Activated CD4-positive, alpha-beta memory T cell treated with anti-CD3 and anti-CD28 coated beads for 36 hours (primary cell): ENCODE measurements at regions of chr15 and their contacts with region 1.

Region 1: DNA sequence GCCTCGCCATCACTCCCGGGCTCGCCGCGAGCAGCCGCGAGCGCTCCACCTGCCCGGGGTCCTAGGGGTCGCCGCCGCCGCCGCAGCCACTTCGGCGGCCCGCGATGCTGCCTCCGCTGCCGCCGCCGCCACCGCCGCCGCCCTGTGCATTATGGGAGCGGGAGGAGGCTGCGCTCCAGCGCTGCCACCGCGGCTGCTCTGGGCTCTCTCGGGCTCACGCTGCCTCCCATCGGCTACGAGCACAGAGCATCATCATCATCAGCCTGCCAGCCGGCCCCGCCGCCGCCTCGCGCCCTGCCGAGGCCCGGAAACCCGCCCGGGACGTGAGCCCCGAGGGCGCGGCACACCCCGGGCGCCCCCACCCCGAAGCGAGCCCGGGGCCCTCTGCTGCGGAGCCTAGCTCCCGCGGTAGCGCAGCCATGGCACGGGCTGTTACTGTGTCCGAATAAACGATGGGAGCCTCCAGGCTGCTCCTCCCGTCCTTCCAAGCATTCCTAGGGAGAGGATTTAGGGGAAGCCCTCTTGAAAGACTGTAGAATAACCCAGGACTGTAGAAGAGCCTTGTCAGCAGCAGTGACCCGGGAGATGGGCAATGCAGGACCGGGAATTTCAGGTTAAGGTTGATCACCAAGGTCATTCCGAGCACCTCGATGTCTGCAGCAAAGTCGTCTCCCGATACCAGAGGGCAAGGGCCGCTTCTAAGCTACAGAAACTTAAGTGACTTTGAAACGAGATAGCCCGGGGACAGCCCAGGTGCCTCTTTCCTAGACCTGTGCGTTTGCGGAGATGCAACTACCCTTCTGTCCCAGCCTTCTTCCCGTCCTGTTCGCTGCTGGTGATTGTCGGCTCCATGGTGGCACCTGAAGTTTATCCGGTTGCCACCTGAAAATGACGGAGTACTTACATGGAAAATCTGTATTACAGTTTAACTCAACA is 579 bp upstream of the MYO5A start:
- DNase-seq: peak; percentile 86
- H3K4me3 Mint-ChIP-seq: peak overlapping the region; percentile 78
- H3K27ac Mint-ChIP-seq: peak overlapping the region; percentile 75
- H3K4me1 Mint-ChIP-seq: peaks cover 33% of the 10 kb centered on the region
- H3K27me3 Mint-ChIP-seq: peaks cover 2% of the 10 kb centered on the region

Region 2: GRCh38 chr15:52256366-52256765 is 272.9 kb before region 1 on chr15:
- CTCF ChIA-PET with region 1: no interaction called
- POLR2A ChIA-PET with region 1: no interaction called
- intact Hi-C with region 1: loop called (anchors 2 kb)
- DNase-seq: peak; percentile 84
- H3K4me3 Mint-ChIP-seq: peak overlapping the region; percentile 37
- H3K27ac Mint-ChIP-seq: peak overlapping the region; percentile 56
- H3K4me1 Mint-ChIP-seq: peaks cover 23% of the 10 kb centered on the region
- H3K27me3 Mint-ChIP-seq: no peaks in the 10 kb centered on the region

Region 3: DNA sequence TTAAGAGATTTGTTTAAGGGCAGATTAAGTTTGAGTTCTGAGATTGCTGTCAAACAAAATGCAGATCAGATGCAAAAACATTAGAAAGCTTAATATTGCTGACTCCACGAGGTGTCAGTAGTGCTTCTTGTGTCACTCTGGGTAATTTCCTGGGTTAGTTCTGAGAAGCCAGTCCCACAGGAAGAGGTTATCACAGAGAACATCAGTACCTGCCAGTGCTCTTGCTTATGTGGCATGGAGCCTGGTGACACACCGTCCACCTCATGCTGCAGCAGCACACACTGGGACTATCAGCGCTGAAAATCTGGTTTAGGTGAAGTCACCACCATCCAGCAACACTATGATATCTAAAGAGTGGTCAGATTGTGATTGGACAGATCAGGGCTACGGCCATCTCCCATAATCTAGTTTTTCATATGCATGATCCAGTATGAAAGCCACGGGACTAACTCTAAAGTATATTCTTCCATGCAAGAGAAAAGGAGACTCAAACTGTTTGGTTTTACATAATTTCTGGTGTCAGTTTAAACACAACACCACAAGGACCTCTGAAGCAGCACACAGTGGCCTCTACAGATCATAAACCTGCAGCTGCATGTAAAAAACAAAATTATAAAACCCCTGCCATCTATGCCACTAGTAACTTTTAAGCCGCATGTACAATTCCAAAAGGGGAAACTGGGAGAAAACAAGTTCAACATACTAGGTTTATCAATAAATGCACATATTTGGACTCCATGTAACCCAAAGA is 197.6 kb before region 1 on chr15:
- CTCF ChIA-PET with region 1: interaction called, 3 read pairs
- POLR2A ChIA-PET with region 1: interaction called, 3 read pairs
- intact Hi-C with region 1: loop called (anchors 1 kb)
- DNase-seq: peak; percentile 76
- H3K4me3 Mint-ChIP-seq: no peak overlapping the region
- H3K27ac Mint-ChIP-seq: peak overlapping the region; percentile 82
- H3K4me1 Mint-ChIP-seq: peaks cover 18% of the 10 kb centered on the region
- H3K27me3 Mint-ChIP-seq: no peaks in the 10 kb centered on the region

Region 4: DNA sequence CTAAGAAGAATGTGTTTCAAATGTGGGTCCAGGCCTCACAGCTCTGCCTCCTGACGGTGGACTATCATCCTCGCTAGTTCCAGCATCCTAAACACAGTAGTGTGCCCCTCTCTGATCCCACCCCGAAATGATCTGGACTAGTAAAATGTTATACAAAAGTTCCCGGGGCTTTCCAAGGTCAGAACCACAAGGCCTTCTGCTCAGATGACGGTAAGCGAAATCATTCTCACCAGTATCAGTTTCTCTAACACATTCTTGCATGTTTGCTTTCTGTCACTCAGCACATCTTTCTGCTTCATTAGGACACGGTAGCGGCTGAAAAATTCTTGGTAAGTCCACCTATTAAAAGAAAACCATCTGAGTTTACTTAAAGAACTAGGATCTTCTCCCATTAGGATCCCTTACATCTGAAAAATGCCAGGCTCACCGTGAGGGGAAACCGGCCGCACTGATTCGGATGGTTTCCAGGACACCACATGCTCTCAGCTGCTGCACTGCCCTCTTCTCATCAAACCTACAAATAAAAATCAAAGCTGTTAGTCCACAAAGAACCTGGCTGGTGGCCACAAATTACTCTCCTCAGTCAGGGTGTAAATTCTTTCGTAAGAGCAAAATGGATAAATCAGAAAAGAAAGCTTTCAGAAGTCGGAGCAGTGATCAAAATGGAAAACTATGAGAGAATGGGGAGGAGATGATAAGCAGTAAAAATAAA is 149.7 kb before region 1 on chr15:
- CTCF ChIA-PET with region 1: interaction called, 3 read pairs
- POLR2A ChIA-PET with region 1: interaction called, 4 read pairs
- intact Hi-C with region 1: loop called (anchors 1 kb)
- DNase-seq: peak; percentile 51
- H3K4me3 Mint-ChIP-seq: peak overlapping the region; percentile 49
- H3K27ac Mint-ChIP-seq: peak overlapping the region; percentile 75
- H3K4me1 Mint-ChIP-seq: peaks cover 43% of the 10 kb centered on the region
- H3K27me3 Mint-ChIP-seq: no peaks in the 10 kb centered on the region

Region 5: GRCh38 chr15:52481915-52482314 is 47.3 kb before region 1 on chr15:
- CTCF ChIA-PET with region 1: no interaction called
- POLR2A ChIA-PET with region 1: no interaction called
- intact Hi-C with region 1: loop called (anchors 2 kb)
- DNase-seq: peak; percentile 60
- H3K4me3 Mint-ChIP-seq: no peak overlapping the region
- H3K27ac Mint-ChIP-seq: peak overlapping the region; percentile 53
- H3K4me1 Mint-ChIP-seq: peaks cover 67% of the 10 kb centered on the region
- H3K27me3 Mint-ChIP-seq: no peaks in the 10 kb centered on the region

Region 6: DNA sequence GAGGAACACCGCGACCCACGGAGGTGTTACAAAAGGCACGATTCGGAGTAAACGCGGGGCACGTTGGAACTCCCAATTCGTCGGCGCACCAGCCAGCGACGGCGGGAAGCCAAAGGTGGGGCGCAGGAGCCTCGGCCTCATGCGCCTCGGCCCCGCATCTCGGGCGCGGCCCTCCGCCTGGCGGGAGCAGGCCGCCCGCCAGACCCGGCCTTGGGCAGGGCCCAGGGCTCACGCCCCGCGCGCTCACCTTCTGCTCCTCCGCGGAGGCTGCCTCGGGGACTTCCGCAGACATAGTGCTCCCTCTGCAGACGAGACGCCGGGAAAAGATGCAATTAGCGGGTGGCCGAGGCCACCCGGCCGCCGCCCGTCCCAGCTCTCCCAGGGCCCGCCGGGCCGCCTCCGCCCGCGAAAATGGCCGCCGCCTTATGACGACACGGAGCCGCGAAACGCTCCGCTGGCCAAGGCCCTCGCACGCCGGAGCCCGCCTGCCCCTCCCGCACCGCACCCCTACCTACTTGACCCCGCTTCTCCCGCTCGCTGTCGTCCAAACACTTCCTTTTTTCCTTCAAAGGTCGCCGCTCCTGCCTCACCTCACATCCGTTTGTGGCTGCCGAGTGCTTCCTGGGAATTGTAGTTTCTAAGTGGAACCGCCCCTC is 39.5 kb after region 1 on chr15 and contains the start of gene ARPP19:
- CTCF ChIA-PET with region 1: interaction called, 3 read pairs
- POLR2A ChIA-PET with region 1: no interaction called
- intact Hi-C with region 1: loop called (anchors 1 kb)
- DNase-seq: peak; percentile 91
- H3K4me3 Mint-ChIP-seq: peak within 1 kb of the TSS; percentile 98
- H3K27ac Mint-ChIP-seq: peak within 1 kb of the TSS; percentile 96
- H3K4me1 Mint-ChIP-seq: peaks cover 30% of the 10 kb centered on the region
- H3K27me3 Mint-ChIP-seq: no peaks in the 10 kb centered on the region
- total RNA-seq, gene ARPP19: 172 to 183 TPM

Region 7: DNA sequence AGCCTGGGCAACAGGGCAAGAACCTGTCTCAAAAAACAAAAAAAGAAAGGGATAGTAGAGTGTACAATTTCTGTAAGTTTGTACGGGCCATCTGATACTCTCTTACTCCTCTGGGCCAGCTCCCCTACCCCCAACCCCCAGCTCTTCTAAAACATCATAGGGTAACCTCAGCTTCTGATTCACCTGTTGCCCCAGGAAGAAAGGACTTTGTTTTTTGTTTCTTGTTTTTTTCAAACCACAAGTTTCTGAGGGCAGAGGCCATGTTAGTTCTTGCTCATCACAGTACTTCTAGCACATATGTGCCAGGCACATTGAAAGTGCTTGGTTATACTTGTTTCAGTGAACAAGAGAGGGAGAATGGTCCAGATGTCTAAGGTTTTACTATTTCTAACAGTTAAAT is 129.7 kb after region 1 on chr15:
- CTCF ChIA-PET with region 1: no interaction called
- POLR2A ChIA-PET with region 1: no interaction called
- intact Hi-C with region 1: no loop called
- DNase-seq: peak; percentile 64
- H3K4me3 Mint-ChIP-seq: no peak overlapping the region
- H3K27ac Mint-ChIP-seq: peak overlapping the region; percentile 12
- H3K4me1 Mint-ChIP-seq: peaks cover 30% of the 10 kb centered on the region
- H3K27me3 Mint-ChIP-seq: no peaks in the 10 kb centered on the region

Region 8: DNA sequence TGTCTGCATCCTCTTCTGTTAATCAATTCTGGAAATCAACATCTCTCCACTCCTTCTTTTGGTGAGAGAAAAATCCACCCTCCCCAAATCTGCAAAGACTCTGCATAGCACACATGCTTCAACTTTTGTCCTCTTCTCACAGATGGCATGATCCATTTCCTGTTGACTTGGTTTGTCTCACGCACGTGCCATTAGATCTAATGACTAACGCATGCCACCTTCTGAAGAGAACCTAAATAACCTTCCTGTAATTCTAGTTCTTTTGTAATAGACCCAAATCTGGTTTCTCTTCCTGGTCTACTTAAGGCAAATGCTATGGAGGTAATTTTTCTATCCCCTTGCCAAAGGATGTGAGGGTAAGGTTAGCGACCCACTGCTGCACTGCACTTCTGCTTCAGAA is 200.9 kb after region 1 on chr15:
- CTCF ChIA-PET with region 1: interaction called, 9 read pairs
- POLR2A ChIA-PET with region 1: no interaction called
- intact Hi-C with region 1: loop called (anchors 2 kb)
- DNase-seq: peak; percentile 53
- H3K4me3 Mint-ChIP-seq: no peak overlapping the region
- H3K27ac Mint-ChIP-seq: peak overlapping the region; percentile 43
- H3K4me1 Mint-ChIP-seq: peaks cover 36% of the 10 kb centered on the region
- H3K27me3 Mint-ChIP-seq: no peaks in the 10 kb centered on the region